ENCODE measurements at regions of chr6 and their contacts with region 1.

Region 1: DNA sequence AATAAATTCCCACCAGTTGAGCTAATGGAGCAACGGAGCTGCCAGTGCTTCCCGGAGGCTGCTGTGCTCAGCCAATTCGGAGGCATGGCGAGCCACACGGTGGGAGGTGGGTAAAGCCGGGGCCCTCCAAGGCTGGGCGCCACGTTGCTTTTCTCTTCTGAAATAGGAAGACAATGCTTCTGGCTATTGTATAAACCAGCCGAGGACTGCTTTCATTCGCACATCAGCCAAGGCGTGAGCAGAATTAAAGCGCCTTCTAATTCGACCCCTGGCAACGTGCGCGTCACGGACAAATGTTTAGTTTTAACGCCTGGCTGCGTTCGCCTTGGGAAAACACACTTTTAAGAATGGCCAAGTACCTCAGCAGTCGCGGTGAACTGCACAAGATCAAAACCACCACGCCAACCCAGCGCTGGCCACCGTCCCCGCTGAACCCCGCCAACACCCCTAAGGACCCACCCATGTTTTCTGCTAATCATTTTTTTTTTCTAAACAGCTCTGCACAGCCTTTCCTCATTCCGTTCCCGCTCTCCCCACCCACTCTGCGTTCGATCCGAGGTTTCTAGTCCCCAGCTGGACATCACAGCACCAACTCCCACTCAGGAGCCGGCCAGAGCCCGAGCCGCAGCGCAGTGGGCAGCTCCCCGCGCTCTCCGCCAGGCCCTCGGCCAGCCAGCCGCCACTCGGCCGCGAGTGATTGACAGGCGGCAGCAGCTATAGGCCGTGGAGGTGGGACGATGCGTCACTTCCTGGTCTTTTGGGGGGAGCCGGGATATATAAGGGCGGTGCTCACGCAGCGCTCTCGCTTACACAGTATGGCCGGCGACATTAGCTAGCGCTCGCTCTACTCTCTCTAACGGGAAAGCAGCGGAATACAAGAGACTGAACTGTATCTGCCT is at the start of gene AMD1:
- DNase-seq: peak; percentile 96
- ATAC-seq: peak; percentile 77
- H3K4me3 Mint-ChIP-seq: peak within 1 kb of the TSS; percentile 97
- H3K27ac Mint-ChIP-seq: peak within 1 kb of the TSS; percentile 99
- H3K4me1 Mint-ChIP-seq: peaks cover 30% of the 10 kb centered on the region
- H3K27me3 Mint-ChIP-seq: no peaks in the 10 kb centered on the region
- CTCF ChIP-seq: no peak
- total RNA-seq, gene AMD1: 90.2 to 122 TPM (median 90.7 TPM) in 3 replicates

Region 2: GRCh38 chr6:110181131-110182030 is 692.8 kb before region 1 on chr6:
- CTCF ChIA-PET with region 1: no interaction called
- POLR2A ChIA-PET with region 1: no interaction called
- DNase-seq: no peak
- ATAC-seq: no peak
- H3K4me3 Mint-ChIP-seq: no peak overlapping the region
- H3K27ac Mint-ChIP-seq: no peak overlapping the region
- H3K4me1 Mint-ChIP-seq: peaks cover 7% of the 10 kb centered on the region
- H3K27me3 Mint-ChIP-seq: no peaks in the 10 kb centered on the region
- CTCF ChIP-seq: no peak

Region 3: GRCh38 chr6:110682460-110682853 is 191.8 kb before region 1 on chr6:
- CTCF ChIA-PET with region 1: interaction called, 24 read pairs
- POLR2A ChIA-PET with region 1: interaction called, 5 read pairs
- DNase-seq: peak; percentile 23
- ATAC-seq: peak; percentile 88
- H3K4me3 Mint-ChIP-seq: no peak overlapping the region
- H3K27ac Mint-ChIP-seq: no peak overlapping the region
- H3K4me1 Mint-ChIP-seq: peaks cover 2% of the 10 kb centered on the region; the same call in 1 of the 2 replicates
- H3K27me3 Mint-ChIP-seq: no peaks in the 10 kb centered on the region
- CTCF ChIP-seq: peak; percentile 63

Region 4: DNA sequence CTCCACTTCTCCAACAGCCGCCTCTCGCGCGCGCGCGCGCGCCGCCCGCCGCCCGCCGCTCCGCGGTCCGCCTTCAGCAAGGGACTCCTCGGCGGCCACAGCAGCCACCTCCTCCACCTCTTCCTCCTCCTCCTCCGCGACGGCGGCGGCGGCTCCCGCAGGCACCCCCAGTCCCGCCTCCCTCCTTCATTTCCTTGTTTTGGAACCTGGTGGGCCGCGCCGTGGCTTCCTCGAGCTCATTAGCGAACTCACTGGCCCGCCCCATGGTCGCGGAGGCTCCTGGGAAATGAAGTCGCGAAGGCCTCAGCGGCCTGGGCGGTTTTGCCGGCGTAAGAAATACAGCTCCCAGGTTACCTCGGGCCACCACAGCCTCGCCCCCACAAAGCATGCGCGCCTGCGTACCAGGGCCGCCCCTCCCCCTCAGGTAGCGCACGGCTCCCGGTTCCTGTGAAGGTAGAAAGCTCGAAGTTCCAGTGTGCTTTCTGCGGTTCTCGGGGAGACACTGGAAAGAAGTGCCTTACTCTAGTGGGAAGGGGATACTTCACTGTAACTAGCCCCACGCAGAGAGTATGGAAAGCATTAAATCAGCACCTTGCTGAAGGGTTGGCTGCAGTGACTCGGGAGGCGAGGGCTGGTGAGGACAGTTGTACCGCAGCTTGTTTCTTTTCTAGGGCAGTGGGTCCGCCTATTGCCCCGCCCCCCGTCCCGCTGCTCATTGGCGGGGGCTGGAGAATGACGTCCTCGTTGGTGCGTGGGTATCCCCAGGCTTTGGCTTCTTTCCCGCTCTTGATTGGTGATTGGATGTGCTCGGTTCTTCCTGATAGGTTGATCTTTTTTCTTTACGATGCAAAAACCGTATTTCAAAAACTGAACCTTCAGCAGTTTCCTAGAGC is 58.8 kb before region 1 on chr6 and contains the start of gene CDK19:
- CTCF ChIA-PET with region 1: interaction called, 27 read pairs
- POLR2A ChIA-PET with region 1: interaction called, 146 read pairs
- DNase-seq: peak; percentile 98
- ATAC-seq: peak; percentile 84
- H3K4me3 Mint-ChIP-seq: peak within 1 kb of the TSS; percentile 97
- H3K27ac Mint-ChIP-seq: peak within 1 kb of the TSS; percentile 99
- H3K4me1 Mint-ChIP-seq: peaks cover 20% of the 10 kb centered on the region
- H3K27me3 Mint-ChIP-seq: no peaks in the 10 kb centered on the region
- CTCF ChIP-seq: no peak
- total RNA-seq, gene CDK19: 10.6 to 11.7 TPM (median 10.7 TPM) in 3 replicates

Region 5: GRCh38 chr6:110885526-110885925 is 11.3 kb after region 1 on chr6:
- CTCF ChIA-PET with region 1: no interaction called
- POLR2A ChIA-PET with region 1: interaction called, 11 read pairs
- DNase-seq: no peak
- ATAC-seq: no peak
- H3K4me3 Mint-ChIP-seq: no peak overlapping the region
- H3K27ac Mint-ChIP-seq: peak overlapping the region; percentile 83
- H3K4me1 Mint-ChIP-seq: peaks cover 65% of the 10 kb centered on the region
- H3K27me3 Mint-ChIP-seq: no peaks in the 10 kb centered on the region
- CTCF ChIP-seq: no peak

Region 6: GRCh38 chr6:110938171-110938570 is 63.9 kb after region 1 on chr6:
- CTCF ChIA-PET with region 1: no interaction called
- POLR2A ChIA-PET with region 1: no interaction called
- DNase-seq: no peak
- ATAC-seq: no peak
- H3K4me3 Mint-ChIP-seq: no peak overlapping the region
- H3K27ac Mint-ChIP-seq: no peak overlapping the region
- H3K4me1 Mint-ChIP-seq: no peaks in the 10 kb centered on the region
- H3K27me3 Mint-ChIP-seq: no peaks in the 10 kb centered on the region
- CTCF ChIP-seq: no peak

Region 7: DNA sequence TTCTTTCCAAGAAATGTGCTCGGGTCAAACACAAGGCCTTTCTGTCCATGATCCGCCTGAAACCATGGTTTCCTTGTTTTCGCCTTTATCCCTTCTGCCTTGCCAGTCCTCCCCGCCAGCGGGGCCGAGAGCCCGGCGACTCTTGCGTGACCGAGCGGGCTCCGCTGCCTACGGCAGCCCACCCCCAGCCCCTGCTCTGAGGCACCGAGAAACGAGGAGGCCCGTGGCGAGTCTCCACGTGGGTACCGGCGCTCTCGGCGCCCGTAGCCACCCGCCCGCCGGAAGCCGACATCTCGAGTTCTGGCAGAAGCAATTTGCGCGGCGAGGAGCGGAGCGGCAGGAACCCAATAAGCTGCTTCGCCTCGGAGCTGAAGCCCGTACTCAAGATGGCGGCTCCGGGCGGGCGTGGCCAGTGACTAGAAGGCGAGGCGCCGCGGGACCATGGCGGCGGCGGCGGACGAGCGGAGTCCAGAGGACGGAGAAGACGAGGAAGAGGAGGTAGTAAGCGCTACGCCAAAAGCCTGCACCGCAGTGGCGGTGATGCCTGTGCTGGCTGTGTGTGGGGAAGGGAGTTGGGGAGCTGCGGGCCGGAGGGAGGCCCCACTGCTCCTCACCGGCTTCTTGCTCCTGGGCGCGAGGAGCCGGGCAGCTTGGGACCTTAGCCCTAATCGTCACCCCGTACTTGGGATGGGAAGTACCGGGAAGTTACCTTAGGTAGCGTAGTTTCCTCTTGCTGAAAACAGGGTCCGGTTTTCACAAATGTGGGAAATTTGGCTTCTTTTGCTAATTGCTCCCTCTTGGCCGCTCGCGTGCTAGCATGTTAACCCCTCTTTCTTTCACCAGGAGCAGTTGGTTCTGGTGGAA is 84.3 kb after region 1 on chr6 and contains the start of gene GTF3C6:
- CTCF ChIA-PET with region 1: no interaction called
- POLR2A ChIA-PET with region 1: interaction called, 18 read pairs
- DNase-seq: peak; percentile 91
- ATAC-seq: peak; percentile 98
- H3K4me3 Mint-ChIP-seq: peak within 1 kb of the TSS; percentile 96
- H3K27ac Mint-ChIP-seq: peak within 1 kb of the TSS; percentile 99
- H3K4me1 Mint-ChIP-seq: peaks cover 6% of the 10 kb centered on the region
- H3K27me3 Mint-ChIP-seq: no peaks in the 10 kb centered on the region
- CTCF ChIP-seq: no peak
- total RNA-seq, gene GTF3C6: 65.5 to 69.0 TPM (median 67.0 TPM) in 3 replicates

Measured in WTC11 (cell line).